ENCODE measurements at regions of chr9 and their contacts with region 1.

Region 1: DNA sequence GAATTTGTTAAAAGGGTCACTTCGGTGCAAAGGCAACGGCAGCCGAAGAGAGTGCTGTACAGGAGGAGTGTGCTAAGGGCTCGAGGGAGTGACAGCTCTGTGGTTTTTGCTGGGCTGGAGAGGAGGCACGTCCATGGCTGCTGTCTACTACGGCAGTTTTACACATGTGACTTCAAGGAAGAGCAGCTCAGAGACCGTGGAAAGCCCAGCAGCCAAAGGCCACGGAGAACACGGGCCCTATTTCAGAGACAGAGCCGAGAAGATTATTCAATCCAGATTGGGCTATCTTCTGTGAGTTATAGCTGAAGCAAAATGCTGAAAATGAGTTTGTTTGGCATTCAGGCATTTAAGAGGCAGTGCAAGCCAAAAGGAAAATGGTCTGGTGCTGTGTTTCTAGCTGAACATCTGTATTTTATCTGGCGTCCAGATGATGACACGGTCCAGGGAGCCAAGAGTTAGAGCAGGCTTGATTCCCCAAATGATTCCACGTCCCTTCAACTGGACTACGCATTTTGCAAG is 96.4 kb downstream of the RFK start:
- DNase-seq: no peak
- H3K4me3 ChIP-seq: no peak overlapping the region
- H3K27ac ChIP-seq: no peak overlapping the region
- H3K4me1 ChIP-seq: no peaks in the 10 kb centered on the region
- H3K27me3 ChIP-seq: no peaks in the 10 kb centered on the region
- CTCF ChIP-seq: no peak

Region 2: GRCh38 chr9:75265525-75265972 is 1032.2 kb before region 1 on chr9:
- CTCF ChIA-PET with region 1: interaction called, 6 read pairs
- POLR2A ChIA-PET with region 1: no interaction called
- intact Hi-C with region 1: loop called (anchors 1 kb)
- DNase-seq: peak in 1 of 2 experiments; percentile 41
- H3K4me3 ChIP-seq: no peak overlapping the region
- H3K27ac ChIP-seq: no peak overlapping the region
- H3K4me1 ChIP-seq: no peaks in the 10 kb centered on the region
- H3K27me3 ChIP-seq: no peaks in the 10 kb centered on the region
- CTCF ChIP-seq: peak; percentile 95

Region 3: GRCh38 chr9:75866273-75866871 is 431.4 kb before region 1 on chr9:
- CTCF ChIA-PET with region 1: interaction called, 3 read pairs
- POLR2A ChIA-PET with region 1: no interaction called
- intact Hi-C with region 1: loop called (anchors 5 kb)
- DNase-seq: peak in 1 of 2 experiments; percentile 19
- H3K4me3 ChIP-seq: no peak overlapping the region
- H3K27ac ChIP-seq: no peak overlapping the region
- H3K4me1 ChIP-seq: no peaks in the 10 kb centered on the region
- H3K27me3 ChIP-seq: no peaks in the 10 kb centered on the region
- CTCF ChIP-seq: peak; percentile 89

Region 4: GRCh38 chr9:76086539-76086938 is 211.2 kb before region 1 on chr9:
- CTCF ChIA-PET with region 1: no interaction called
- POLR2A ChIA-PET with region 1: interaction called, 6 read pairs
- intact Hi-C with region 1: loop called (anchors 5 kb)
- DNase-seq: no peak
- H3K4me3 ChIP-seq: no peak overlapping the region
- H3K27ac ChIP-seq: no peak overlapping the region
- H3K4me1 ChIP-seq: no peaks in the 10 kb centered on the region
- H3K27me3 ChIP-seq: no peaks in the 10 kb centered on the region
- CTCF ChIP-seq: no peak

Region 5: DNA sequence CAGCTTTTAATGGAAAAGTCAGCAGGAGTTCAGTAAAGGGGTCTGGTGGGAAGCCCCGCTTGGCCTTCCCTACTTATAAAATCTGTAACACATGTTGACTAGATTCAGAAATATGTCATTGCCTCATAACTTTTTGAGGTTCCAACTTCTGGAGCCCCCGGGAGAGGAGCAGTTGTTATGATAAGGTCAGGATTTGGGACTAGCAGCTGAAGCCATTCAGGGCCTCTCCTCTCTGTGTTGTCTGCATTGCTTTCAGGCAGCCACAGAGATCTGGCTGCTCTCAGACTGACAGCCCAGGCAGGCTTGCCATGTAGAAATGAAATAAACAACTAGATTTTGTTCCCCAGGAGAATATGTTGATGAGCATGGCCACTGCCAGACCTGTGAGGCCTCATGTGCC is 70.6 kb before region 1 on chr9:
- CTCF ChIA-PET with region 1: no interaction called
- POLR2A ChIA-PET with region 1: no interaction called
- intact Hi-C with region 1: no loop called
- DNase-seq: no peak
- H3K4me3 ChIP-seq: no peak overlapping the region
- H3K27ac ChIP-seq: no peak overlapping the region
- H3K4me1 ChIP-seq: peaks cover 10% of the 10 kb centered on the region
- H3K27me3 ChIP-seq: no peaks in the 10 kb centered on the region
- CTCF ChIP-seq: no peak

Region 6: DNA sequence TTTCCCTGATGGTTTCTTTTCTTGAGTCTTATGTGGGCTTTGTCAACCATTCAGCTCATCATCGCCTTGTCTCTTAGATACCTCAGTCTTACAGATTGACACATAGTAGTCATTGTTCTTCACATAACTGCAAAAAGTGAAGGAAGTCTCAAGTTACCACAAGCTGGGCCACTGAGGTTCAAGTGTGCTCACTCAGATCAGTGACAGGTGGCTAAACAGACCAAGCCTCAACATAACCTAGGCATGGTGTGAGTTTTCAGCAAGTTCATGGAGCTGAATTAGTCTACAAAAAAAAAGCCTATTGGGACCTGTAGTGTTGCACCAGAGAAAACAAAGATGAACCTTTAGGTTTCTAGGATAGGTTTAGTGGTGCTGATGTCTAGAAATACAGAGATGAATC is 38.2 kb after region 1 on chr9:
- CTCF ChIA-PET with region 1: no interaction called
- POLR2A ChIA-PET with region 1: no interaction called
- intact Hi-C with region 1: no loop called
- DNase-seq: no peak
- H3K4me3 ChIP-seq: no peak overlapping the region
- H3K27ac ChIP-seq: no peak overlapping the region
- H3K4me1 ChIP-seq: no peaks in the 10 kb centered on the region
- H3K27me3 ChIP-seq: no peaks in the 10 kb centered on the region
- CTCF ChIP-seq: no peak